Gastrocnemius medialis (tissue), 4 donors: ENCODE measurements at regions of chr10 and their contacts with region 1.

Region 1: DNA sequence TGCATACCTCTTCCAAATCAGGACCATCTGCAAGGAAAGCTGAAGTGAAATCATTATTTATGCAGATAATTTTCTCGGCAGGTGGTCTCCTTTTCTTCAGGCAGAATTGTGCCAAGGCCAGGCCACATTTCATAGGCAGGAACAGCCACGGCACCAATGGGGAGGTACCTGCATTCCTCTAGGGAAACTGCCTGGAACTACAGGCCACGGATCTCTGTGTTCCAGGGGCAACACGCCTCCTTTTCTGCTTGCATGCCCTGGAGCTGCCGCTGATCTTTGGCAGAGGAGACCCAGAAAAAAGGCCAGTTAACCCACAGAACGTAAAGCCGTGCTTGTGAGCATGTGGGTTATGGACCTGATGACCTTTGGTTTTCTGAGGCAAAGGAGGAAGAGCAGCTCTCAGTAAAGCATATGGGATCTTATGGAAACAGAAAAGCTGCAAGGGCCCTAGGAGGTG is 111.2 kb upstream of the KIAA1217 start:
- DNase-seq: no peak
- ATAC-seq: no peak
- H3K4me3 ChIP-seq: no peak overlapping the region
- H3K27ac ChIP-seq: no peak overlapping the region
- H3K4me1 ChIP-seq: peaks cover 0 to 4% of the 10 kb centered on the region in 2 donors
- H3K27me3 ChIP-seq: no peaks in the 10 kb centered on the region
- CTCF ChIP-seq: no peak
- POLR2A ChIP-seq: no peak

Region 2: DNA sequence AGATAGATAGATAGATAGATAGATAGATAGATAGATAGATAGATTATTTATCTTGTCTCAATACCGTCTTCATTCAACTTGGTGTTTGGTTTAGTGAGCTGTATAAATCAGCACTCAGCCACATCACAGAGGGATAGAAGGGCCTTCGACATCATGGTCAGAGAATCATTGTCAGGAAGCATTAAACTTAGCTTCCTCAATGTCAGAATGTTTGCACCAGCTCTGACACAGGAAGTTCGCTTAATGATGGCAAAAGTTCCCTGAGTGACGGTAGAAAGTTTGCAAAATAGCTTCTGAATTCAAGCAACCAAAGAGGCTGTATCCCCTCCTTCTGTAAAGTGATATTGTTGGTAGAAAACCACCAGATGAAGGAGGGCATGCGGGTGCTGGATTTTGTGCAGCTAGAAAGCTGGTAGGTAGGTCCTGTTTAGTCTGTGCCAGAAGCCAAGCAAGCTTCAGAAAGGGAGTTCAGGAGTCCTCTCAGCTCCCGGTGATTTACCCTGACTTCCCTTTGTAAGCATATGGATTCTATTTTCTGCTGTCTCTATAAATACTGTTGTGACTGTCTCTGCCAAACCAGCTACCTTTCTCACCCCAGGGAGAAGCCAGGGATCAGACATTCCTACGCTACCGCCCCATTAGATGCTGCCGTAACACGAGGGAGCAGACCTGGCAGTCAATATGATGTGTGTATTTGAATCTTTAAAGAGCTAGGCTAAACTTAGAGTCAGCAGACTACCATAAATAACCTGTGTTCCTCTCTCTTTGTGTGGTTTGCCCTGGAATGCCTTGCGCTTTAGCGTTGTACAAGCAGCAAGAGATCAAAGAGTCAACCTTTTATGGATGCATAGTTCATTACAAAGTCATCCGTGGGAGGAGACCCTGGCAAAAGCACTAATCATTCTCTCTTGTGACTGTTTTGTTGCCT is 89.4 kb before region 1 on chr10:
- in situ Hi-C with region 1: no loop called
- intact Hi-C with region 1: no loop called
- DNase-seq: peak in 1 of 2 donors; percentile 52
- ATAC-seq: peak; percentile 84 to 96
- H3K4me3 ChIP-seq: peak overlapping the region in 3 of 4 donors; percentile 1 to 32 (median 25)
- H3K27ac ChIP-seq: peak overlapping the region; percentile 62 to 83 (median 74)
- H3K4me1 ChIP-seq: peaks cover 16 to 19% of the 10 kb centered on the region in 2 donors
- H3K27me3 ChIP-seq: no peaks in the 10 kb centered on the region
- CTCF ChIP-seq: no peak
- POLR2A ChIP-seq: no peak

Region 3: GRCh38 chr10:24153031-24153430 is 55.3 kb after region 1 on chr10:
- in situ Hi-C with region 1: no loop called
- intact Hi-C with region 1: loop called (anchors 10 kb)
- DNase-seq: no peak
- ATAC-seq: no peak
- H3K4me3 ChIP-seq: no peak overlapping the region
- H3K27ac ChIP-seq: no peak overlapping the region
- H3K4me1 ChIP-seq: peaks cover 0 to 4% of the 10 kb centered on the region in 2 donors
- H3K27me3 ChIP-seq: no peaks in the 10 kb centered on the region
- CTCF ChIP-seq: no peak
- POLR2A ChIP-seq: no peak